ENCODE measurements at regions of chr12 and their contacts with region 1.

Region 1: DNA sequence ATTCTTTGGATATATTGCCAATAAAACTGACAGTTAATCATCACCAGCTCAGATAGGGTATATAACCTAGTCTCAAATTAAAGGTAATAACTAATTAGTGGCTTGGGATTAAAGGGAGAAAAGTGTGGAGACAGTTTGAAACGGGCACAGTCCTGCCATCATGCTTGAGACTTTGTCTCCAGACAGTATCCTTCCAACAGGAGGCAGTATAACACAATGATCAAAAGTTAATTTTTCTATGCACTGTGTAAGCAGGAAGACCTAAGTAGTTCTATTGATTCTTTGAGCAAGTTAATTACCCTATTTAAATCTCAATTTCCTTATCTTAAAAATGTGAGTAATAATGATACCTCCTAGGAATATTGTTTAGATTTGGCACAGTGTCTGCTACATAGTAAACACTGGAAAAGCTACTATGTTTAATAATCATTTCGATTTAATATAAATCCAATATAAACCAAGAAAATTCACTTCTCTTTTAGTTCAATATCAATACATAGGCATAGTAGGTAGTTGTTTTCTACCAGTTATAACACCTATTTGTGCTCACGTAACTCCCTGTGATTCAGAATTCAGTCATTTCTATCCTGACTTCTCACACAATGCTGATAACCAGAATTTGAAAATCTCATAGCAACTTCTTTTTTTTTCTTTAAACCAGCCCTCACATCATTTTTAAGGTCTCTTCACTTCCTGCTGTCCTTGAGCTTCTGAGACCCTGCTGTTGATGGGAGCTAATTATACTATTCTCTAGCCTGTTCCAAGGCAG is 53.7 kb downstream of the GALNT4 start:
- DNase-seq: peak; percentile 33
- ATAC-seq: peak; percentile 90
- H3K4me3 ChIP-seq: no peak overlapping the region
- H3K27ac ChIP-seq: no peak overlapping the region
- H3K4me1 ChIP-seq: no peaks in the 10 kb centered on the region
- H3K27me3 ChIP-seq: no peaks in the 10 kb centered on the region
- CTCF ChIP-seq: peak; percentile 71; the same call in 1 of the 2 replicates

Region 2: DNA sequence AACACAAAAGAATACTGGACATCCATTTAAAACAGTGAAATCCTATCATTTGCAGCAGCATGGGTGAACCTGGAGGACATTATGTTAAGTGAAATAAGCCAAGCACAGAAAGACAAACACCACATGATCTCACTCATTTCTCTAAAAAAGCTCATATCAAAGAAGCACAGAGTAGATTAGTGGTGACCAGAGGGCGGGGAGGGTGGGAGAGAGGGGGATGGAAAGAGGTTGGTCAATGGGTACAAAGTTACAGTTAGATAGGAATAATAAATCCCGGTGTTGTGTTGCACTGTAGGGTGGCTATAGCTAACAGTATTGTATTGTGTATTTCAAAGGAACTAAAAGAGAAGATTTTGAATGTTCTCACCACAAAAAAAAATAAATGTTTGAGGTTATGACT is 171.0 kb before region 1 on chr12:
- CTCF ChIA-PET with region 1: no interaction called
- POLR2A ChIA-PET with region 1: no interaction called
- in situ Hi-C with region 1: no loop called
- intact Hi-C with region 1: no loop called
- DNase-seq: no peak
- ATAC-seq: no peak
- H3K4me3 ChIP-seq: no peak overlapping the region
- H3K27ac ChIP-seq: no peak overlapping the region
- H3K4me1 ChIP-seq: no peaks in the 10 kb centered on the region
- H3K27me3 ChIP-seq: no peaks in the 10 kb centered on the region
- CTCF ChIP-seq: no peak

Region 3: DNA sequence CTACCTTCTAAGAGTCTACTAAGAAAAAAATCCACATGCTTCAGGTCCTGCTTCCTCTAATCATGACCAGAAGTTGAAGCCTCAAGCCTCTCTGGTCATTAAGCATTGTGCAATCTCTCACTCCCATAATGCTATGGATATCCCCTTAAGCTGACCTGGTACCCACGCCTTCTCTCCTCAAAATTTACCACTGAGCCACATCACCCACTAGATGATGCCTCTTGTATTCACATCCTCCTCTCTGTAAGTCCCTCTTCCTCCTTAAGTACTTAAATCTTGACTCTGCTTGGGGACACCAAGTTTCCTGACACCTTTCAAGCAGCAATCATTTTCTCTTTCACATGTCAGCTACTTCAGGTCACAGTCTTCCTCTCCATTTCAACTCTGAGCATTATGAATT is 43.8 kb after region 1 on chr12:
- CTCF ChIA-PET with region 1: no interaction called
- POLR2A ChIA-PET with region 1: no interaction called
- in situ Hi-C with region 1: no loop called
- intact Hi-C with region 1: loop called (anchors 5 kb)
- DNase-seq: no peak
- ATAC-seq: no peak
- H3K4me3 ChIP-seq: no peak overlapping the region
- H3K27ac ChIP-seq: no peak overlapping the region
- H3K4me1 ChIP-seq: no peaks in the 10 kb centered on the region
- H3K27me3 ChIP-seq: no peaks in the 10 kb centered on the region
- CTCF ChIP-seq: no peak

Measured in Panc1 (cell line).